Activated naive CD4-positive, alpha-beta T cell treated with anti-CD3 and anti-CD28 coated beads for 36 hours (primary cell): ENCODE measurements at regions of chr9 and their contacts with region 1.

Region 1: GRCh38 chr9:89410641-89411350 is 87.1 kb downstream of the SEMA4D start:
- DNase-seq: peak; percentile 85
- H3K4me3 Mint-ChIP-seq: peak overlapping the region; percentile 39
- H3K27ac Mint-ChIP-seq: peak overlapping the region; percentile 89
- H3K4me1 Mint-ChIP-seq: peaks cover 86% of the 10 kb centered on the region
- H3K27me3 Mint-ChIP-seq: no peaks in the 10 kb centered on the region

Region 2: DNA sequence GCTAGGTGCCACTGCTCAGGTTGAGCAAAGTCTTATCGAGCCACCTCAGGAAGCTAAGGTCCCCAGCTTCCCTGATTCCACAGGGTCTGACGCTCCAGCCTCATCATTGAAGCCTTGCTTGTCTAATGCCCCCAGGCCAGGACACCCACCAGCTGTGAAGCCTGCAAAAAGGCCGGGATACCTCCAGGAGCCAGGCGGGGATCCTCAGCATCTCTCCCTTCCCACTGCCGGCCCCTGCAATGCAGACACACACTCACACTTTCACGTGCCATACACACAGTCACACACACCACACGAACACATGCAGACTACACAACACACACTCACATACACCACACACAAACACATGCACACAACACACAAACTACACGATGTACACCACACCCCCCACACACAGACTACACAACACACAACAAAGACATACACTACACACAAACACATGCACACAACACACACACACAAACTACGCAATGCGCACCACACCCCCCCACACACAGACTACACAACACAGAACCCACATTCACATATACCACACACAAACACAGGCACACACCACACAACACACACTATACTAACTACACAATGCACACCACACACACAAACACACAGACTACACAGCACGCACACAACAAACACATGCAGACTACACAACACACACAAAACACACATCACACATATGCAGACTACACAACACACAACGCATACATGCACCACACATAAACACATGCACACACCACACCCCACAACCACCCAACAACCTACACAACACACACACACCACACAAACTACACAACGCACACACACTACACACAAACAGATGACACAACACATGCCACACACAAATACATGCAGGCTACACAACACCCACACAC is 437.3 kb before region 1 on chr9:
- CTCF ChIA-PET with region 1: no interaction called
- intact Hi-C with region 1: no loop called
- DNase-seq: no peak
- H3K4me3 Mint-ChIP-seq: no peak overlapping the region
- H3K27ac Mint-ChIP-seq: no peak overlapping the region
- H3K4me1 Mint-ChIP-seq: peaks cover 10% of the 10 kb centered on the region
- H3K27me3 Mint-ChIP-seq: peaks cover 7% of the 10 kb centered on the region

Region 3: GRCh38 chr9:89234205-89235067 is 176.4 kb before region 1 on chr9:
- CTCF ChIA-PET with region 1: no interaction called
- intact Hi-C with region 1: no loop called
- DNase-seq: peak; percentile 41
- H3K4me3 Mint-ChIP-seq: no peak overlapping the region
- H3K27ac Mint-ChIP-seq: no peak overlapping the region
- H3K4me1 Mint-ChIP-seq: peaks cover 17% of the 10 kb centered on the region
- H3K27me3 Mint-ChIP-seq: peaks cover 42% of the 10 kb centered on the region

Region 4: GRCh38 chr9:89318123-89319014 is 92.4 kb before region 1 on chr9 and contains the start of gene SECISBP2:
- CTCF ChIA-PET with region 1: interaction called, 3 read pairs
- intact Hi-C with region 1: loop called (anchors 1 kb)
- DNase-seq: peak; percentile 95
- H3K4me3 Mint-ChIP-seq: peak within 1 kb of the TSS; percentile 89
- H3K27ac Mint-ChIP-seq: peak within 1 kb of the TSS; percentile 93
- H3K4me1 Mint-ChIP-seq: peaks cover 79% of the 10 kb centered on the region
- H3K27me3 Mint-ChIP-seq: no peaks in the 10 kb centered on the region
- total RNA-seq, gene SECISBP2: 42.8 to 45.8 TPM

Region 5: DNA sequence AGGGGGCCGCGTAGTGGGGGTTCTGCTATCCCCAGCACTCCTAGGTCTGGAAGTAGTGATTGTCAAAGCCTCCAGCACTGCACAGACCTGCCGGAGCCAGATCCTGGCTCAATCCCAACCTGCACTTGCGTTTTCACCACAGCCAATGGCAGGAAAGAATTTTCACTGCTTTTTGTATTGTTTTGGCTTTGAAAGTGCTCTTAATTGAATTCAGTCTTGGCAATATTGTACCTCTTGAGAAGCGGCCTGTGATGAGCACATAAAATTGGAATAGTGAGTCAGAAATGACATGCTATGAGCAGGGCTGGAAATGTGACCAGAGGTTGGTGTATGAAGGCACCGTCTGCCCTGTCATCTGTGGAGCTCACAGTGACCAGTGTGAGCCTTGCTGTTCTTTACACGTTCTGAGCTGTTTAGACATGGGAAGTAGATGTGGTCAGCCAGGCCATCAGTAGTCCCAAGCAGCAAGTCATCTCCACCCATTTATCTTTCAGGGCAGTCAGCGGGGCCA is 51.0 kb before region 1 on chr9:
- CTCF ChIA-PET with region 1: no interaction called
- intact Hi-C with region 1: no loop called
- DNase-seq: no peak
- H3K4me3 Mint-ChIP-seq: no peak overlapping the region
- H3K27ac Mint-ChIP-seq: peak overlapping the region; percentile 21
- H3K4me1 Mint-ChIP-seq: no peaks in the 10 kb centered on the region
- H3K27me3 Mint-ChIP-seq: no peaks in the 10 kb centered on the region

Region 6: GRCh38 chr9:89428901-89429890 is 18.4 kb after region 1 on chr9:
- CTCF ChIA-PET with region 1: interaction called, 9 read pairs
- intact Hi-C with region 1: loop called (anchors 1 kb)
- DNase-seq: peak; percentile 79
- H3K4me3 Mint-ChIP-seq: no peak overlapping the region
- H3K27ac Mint-ChIP-seq: peak overlapping the region; percentile 98
- H3K4me1 Mint-ChIP-seq: peaks cover 90% of the 10 kb centered on the region
- H3K27me3 Mint-ChIP-seq: no peaks in the 10 kb centered on the region

Region 7: GRCh38 chr9:89461265-89461664 is 50.5 kb after region 1 on chr9:
- CTCF ChIA-PET with region 1: interaction called, 12 read pairs
- intact Hi-C with region 1: loop called (anchors 1 kb)
- DNase-seq: peak; percentile 71
- H3K4me3 Mint-ChIP-seq: no peak overlapping the region
- H3K27ac Mint-ChIP-seq: peak overlapping the region; percentile 50
- H3K4me1 Mint-ChIP-seq: peaks cover 96% of the 10 kb centered on the region
- H3K27me3 Mint-ChIP-seq: no peaks in the 10 kb centered on the region

Region 8: DNA sequence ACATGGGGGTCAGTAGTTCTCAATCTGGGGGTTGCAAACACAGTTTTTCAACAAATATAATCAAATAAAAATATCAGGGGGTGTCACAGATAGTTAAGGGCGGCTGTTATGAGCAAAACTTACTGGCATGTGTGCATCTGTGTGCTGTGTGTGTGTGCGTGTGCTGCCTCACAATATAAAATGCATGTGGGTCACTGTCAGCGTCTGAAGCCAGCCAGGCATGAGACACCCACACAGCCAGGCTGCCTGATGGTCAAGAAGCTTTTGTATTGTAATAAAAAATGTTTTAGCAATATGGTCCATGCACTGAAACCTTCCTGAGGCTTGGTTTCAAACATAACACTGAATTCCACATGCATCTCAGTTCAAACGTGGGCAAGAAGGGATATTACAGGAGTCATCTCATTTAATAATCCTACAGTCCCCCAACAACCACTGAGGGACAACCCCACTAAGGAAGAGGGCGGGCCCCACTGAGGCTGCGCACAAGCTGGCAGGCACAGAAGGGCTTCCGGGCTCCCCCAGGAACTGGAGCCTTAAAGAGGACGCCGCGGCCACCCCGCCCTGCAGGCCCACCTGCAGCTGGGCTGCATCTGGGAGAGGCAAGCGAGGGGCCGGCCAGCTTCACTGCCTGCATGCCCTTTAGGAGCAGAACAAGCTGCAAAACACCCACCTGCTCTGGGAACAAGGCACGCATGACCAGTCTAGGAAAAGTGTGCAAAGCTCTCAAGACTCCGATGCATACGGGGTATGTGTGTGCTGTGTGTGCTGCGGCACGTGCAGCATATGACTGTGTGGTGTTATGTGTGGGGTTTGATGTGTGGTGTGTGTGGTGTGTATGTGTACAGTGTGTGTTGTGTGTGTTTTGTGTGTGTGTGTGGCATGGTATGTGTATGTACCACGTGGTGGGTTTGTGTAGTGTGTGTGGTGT is 73.1 kb after region 1 on chr9:
- CTCF ChIA-PET with region 1: interaction called, 9 read pairs
- intact Hi-C with region 1: loop called (anchors 2 kb)
- DNase-seq: peak; percentile 75
- H3K4me3 Mint-ChIP-seq: peak overlapping the region; percentile 78
- H3K27ac Mint-ChIP-seq: peak overlapping the region; percentile 91
- H3K4me1 Mint-ChIP-seq: peaks cover 87% of the 10 kb centered on the region
- H3K27me3 Mint-ChIP-seq: no peaks in the 10 kb centered on the region

Region 9: DNA sequence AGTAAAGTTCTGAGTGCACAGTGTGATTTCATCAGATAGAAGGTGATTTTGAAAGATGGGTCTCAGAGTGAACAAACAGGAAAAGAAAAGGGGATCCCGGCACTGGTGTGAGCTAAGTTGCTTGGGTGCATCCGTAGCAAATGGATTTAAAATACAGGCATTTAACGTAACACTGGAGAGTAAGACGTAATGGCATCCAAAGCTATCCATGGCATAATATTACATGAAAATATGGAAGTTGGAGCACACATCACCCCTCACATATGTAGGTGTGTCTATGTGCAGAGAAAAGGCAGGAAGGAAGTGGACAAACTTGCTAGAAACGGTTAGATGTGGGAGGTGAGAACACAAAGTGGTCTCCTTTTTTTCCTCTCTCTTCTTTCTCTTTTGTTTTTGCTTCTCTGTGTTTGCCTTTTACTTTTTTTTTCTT is 125.4 kb after region 1 on chr9:
- CTCF ChIA-PET with region 1: interaction called, 10 read pairs
- intact Hi-C with region 1: loop called (anchors 1 kb)
- DNase-seq: peak; percentile 55
- H3K4me3 Mint-ChIP-seq: peak overlapping the region; percentile 44
- H3K27ac Mint-ChIP-seq: peak overlapping the region; percentile 86
- H3K4me1 Mint-ChIP-seq: peaks cover 88% of the 10 kb centered on the region
- H3K27me3 Mint-ChIP-seq: no peaks in the 10 kb centered on the region